ENCODE measurements at regions of chr5 and their contacts with region 1.

Region 1: DNA sequence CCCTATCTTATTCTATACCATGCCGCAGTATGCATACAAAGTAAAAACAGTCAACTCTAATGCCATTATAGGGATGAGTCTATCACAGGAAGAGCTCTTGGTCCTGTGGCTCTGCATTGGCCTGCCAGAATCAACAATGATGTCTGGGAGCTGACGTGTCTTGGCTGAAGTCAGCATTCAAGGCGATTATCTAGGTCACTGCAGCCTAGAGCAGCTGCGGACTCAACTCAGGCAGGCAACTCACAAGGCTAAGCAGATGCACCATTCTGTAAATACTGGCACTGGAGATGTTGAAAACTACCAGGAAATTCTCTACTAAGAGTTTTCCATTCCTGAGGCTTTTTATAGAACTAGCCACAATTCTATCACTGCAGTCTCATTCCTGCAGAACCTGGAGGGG is 13.3 kb downstream of the SPATA9 start:
- DNase-seq: peak; percentile 83 to 90 (median 86)
- H3K4me3 ChIP-seq: no peak overlapping the region
- H3K27ac ChIP-seq: peak overlapping the region in 1 of 2 donors; percentile 63
- H3K4me1 ChIP-seq: peaks cover 12% of the 10 kb centered on the region
- H3K27me3 ChIP-seq: no peaks in the 10 kb centered on the region
- CTCF ChIP-seq: no peak
- EP300 ChIP-seq: no peak
- POLR2A ChIP-seq: no peak

Region 2: GRCh38 chr5:95712347-95712958 is 42.9 kb after region 1 on chr5:
- intact Hi-C with region 1: loop called in 2 of 4 experiments (anchors 5 kb)
- DNase-seq: no peak
- H3K4me3 ChIP-seq: no peak overlapping the region
- H3K27ac ChIP-seq: no peak overlapping the region
- H3K4me1 ChIP-seq: peaks cover 11% of the 10 kb centered on the region
- H3K27me3 ChIP-seq: no peaks in the 10 kb centered on the region
- CTCF ChIP-seq: no peak
- EP300 ChIP-seq: no peak
- POLR2A ChIP-seq: no peak

Region 3: GRCh38 chr5:95718203-95718602 is 48.7 kb after region 1 on chr5:
- intact Hi-C with region 1: loop called in 2 of 4 experiments (anchors 5 kb)
- DNase-seq: no peak
- H3K4me3 ChIP-seq: no peak overlapping the region
- H3K27ac ChIP-seq: no peak overlapping the region
- H3K4me1 ChIP-seq: peaks cover 8% of the 10 kb centered on the region
- H3K27me3 ChIP-seq: no peaks in the 10 kb centered on the region
- CTCF ChIP-seq: no peak
- EP300 ChIP-seq: no peak
- POLR2A ChIP-seq: no peak

Region 4: DNA sequence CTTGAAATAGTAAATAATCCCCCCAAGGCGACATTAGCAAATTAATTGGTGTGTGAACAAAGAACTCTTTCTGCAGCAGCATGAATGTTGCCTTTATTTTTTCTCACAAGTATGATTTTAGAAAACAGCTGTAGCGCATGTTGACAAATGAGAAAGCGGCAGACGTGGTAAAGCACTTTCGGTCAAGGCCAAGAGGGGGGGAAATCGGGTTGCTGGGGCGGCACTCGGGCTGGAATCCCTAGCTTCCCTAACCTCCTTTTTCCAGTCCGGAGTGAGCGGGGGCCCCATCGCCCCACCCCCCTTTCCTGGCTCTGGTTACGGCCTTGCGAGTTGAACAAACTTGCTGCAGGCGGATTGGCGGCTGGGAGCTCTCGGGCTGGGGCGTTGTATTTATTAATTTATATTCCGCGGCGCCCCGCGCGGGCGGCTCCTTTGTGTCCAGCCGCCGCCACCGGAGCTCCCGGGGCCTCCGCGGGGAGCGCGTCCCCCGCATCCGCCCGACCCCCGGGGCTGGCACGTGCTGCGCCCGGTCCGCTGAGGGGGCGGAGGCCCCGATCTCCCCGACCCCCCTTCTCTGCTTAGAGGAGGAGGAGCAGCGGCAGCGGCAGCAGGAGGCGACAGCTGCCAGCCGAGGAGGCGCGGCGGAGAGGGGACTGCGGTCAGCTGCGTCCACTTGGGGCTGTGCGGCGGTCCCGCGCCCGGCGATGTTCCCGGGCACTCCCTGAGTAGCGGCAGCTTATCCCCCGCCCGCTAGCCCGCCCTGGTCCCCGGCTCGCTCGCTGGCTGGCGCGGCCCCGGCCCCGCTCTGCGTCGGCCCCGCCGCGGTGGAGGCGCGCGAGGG is 61.4 kb after region 1 on chr5 and contains the start of gene RHOBTB3:
- intact Hi-C with region 1: loop called in 3 of 4 experiments (anchors 5 to 10 kb)
- DNase-seq: peak; percentile 97 to 98 (median 98)
- H3K4me3 ChIP-seq: peak within 1 kb of the TSS; percentile 87
- H3K27ac ChIP-seq: peak within 1 kb of the TSS; percentile 99
- H3K4me1 ChIP-seq: peaks cover 14% of the 10 kb centered on the region
- H3K27me3 ChIP-seq: no peaks in the 10 kb centered on the region
- CTCF ChIP-seq: no peak
- EP300 ChIP-seq: no peak
- POLR2A ChIP-seq: peak; percentile 84
- total RNA-seq, gene RHOBTB3: 106 to 221 (median 200) TPM

Region 5: GRCh38 chr5:95781101-95781583 is 111.6 kb after region 1 on chr5:
- intact Hi-C with region 1: loop called in 1 of 4 experiments (anchors 10 kb)
- DNase-seq: peak; percentile 72 to 83 (median 78)
- H3K4me3 ChIP-seq: no peak overlapping the region
- H3K27ac ChIP-seq: peak overlapping the region in 1 of 2 donors; percentile 1
- H3K4me1 ChIP-seq: peaks cover 16% of the 10 kb centered on the region
- H3K27me3 ChIP-seq: no peaks in the 10 kb centered on the region
- CTCF ChIP-seq: peak; percentile 65 to 83 (median 78)
- EP300 ChIP-seq: no peak
- POLR2A ChIP-seq: no peak

Region 6: GRCh38 chr5:95846554-95847260 is 177.2 kb after region 1 on chr5:
- intact Hi-C with region 1: loop called in 1 of 4 experiments (anchors 5 kb)
- DNase-seq: peak; percentile 59 to 81 (median 70)
- H3K4me3 ChIP-seq: no peak overlapping the region
- H3K27ac ChIP-seq: no peak overlapping the region
- H3K4me1 ChIP-seq: no peaks in the 10 kb centered on the region
- H3K27me3 ChIP-seq: no peaks in the 10 kb centered on the region
- CTCF ChIP-seq: peak; percentile 72 to 93 (median 93)
- EP300 ChIP-seq: no peak
- POLR2A ChIP-seq: no peak

Region 7: GRCh38 chr5:97550164-97550563 is 1880.6 kb after region 1 on chr5:
- intact Hi-C with region 1: no loop called
- DNase-seq: no peak
- H3K4me3 ChIP-seq: no peak overlapping the region
- H3K27ac ChIP-seq: no peak overlapping the region
- H3K4me1 ChIP-seq: no peaks in the 10 kb centered on the region
- H3K27me3 ChIP-seq: no peaks in the 10 kb centered on the region
- CTCF ChIP-seq: no peak
- EP300 ChIP-seq: no peak
- POLR2A ChIP-seq: no peak